HEK293 (cell line): ENCODE measurements at regions of chr6 and their contacts with region 1.

Region 1: GRCh38 chr6:158131926-158132325 is 36.1 kb downstream of the SERAC1 start:
- H3K4me3 ChIP-seq: no peak overlapping the region
- H3K27ac ChIP-seq: no peak overlapping the region
- H3K4me1 ChIP-seq: no peaks in the 10 kb centered on the region
- CTCF ChIP-seq: peak; percentile 57; the same call in 1 of the 2 replicates

Region 2: GRCh38 chr6:158026054-158026900 is 105.6 kb before region 1 on chr6:
- CTCF ChIA-PET with region 1: no interaction called
- POLR2A ChIA-PET with region 1: no interaction called
- H3K4me3 ChIP-seq: peak overlapping the region; percentile 18
- H3K27ac ChIP-seq: peak overlapping the region; percentile 45; the same call in 1 of the 2 replicates
- H3K4me1 ChIP-seq: peaks cover 16% of the 10 kb centered on the region
- CTCF ChIP-seq: peak; percentile 92

Region 3: GRCh38 chr6:158143700-158144099 is 11.8 kb after region 1 on chr6:
- CTCF ChIA-PET with region 1: interaction called, 103 read pairs
- POLR2A ChIA-PET with region 1: interaction called, 6 read pairs
- H3K4me3 ChIP-seq: no peak overlapping the region
- H3K27ac ChIP-seq: no peak overlapping the region
- H3K4me1 ChIP-seq: no peaks in the 10 kb centered on the region
- CTCF ChIP-seq: no peak